Activated CD8-positive, alpha-beta T cell treated with anti-CD3 and anti-CD28 coated beads for 36 hours (primary cell): ENCODE measurements at regions of chr6 and their contacts with region 1.

Region 1: GRCh38 chr6:166989427-166990032 is 9.7 kb upstream of the CEP43 start:
- DNase-seq: peak; percentile 44
- ATAC-seq: peak; percentile 75
- H3K4me3 Mint-ChIP-seq: no peak overlapping the region
- H3K27ac Mint-ChIP-seq: no peak overlapping the region
- H3K4me1 Mint-ChIP-seq: peaks cover 1% of the 10 kb centered on the region
- H3K27me3 Mint-ChIP-seq: no peaks in the 10 kb centered on the region
- CTCF ChIP-seq: peak; percentile 51

Region 2: DNA sequence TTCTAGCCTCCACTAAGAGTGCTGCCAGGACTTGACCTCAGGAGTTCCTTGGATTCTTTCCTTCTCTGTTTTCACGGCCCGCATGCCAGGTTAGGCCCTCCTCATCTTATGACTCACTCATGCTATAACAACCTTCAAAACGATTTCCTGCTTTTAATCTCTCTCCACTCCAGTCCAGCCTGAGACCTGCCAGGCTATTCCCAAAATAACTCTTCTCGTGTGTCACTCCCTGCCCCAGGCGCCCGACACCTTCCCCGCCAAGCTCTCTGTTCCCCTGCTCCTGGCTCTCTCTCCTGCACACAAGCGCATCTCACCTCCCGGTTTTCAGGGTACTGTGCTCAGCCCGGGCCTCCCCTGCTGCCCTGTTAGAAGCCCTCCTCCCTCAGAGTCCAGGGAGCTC is 298.3 kb before region 1 on chr6:
- CTCF ChIA-PET with region 1: no interaction called
- POLR2A ChIA-PET with region 1: no interaction called
- intact Hi-C with region 1: no loop called
- DNase-seq: no peak
- ATAC-seq: no peak
- H3K4me3 Mint-ChIP-seq: no peak overlapping the region
- H3K27ac Mint-ChIP-seq: no peak overlapping the region
- H3K4me1 Mint-ChIP-seq: no peaks in the 10 kb centered on the region
- H3K27me3 Mint-ChIP-seq: no peaks in the 10 kb centered on the region
- CTCF ChIP-seq: no peak

Region 3: DNA sequence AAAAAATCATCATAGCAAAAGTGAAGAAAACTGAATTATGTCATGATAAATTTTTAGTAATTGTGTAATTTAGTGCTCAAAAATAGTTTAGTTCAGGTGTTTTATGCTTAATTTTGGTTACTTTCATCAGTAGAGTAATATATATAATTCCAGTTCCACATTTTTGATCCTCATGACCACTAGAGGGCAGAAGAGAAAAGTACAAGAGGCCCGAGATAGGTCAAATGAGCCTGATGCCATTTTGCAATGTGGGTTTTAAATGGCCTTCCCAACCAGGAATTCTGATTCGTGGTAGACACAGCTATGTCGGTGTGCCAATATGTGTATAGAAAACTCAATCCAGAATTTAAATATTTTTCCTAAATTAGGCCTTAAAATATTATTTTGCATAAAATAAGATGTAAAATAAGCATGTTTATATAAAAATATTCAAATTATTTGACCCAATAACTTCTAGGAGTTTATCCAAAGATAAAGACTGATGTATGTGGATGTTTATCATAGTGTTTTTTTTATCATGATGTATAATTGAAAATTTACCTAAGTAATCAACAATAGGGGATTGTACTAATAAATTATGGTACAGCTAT is 202.7 kb before region 1 on chr6:
- CTCF ChIA-PET with region 1: interaction called, 33 read pairs
- POLR2A ChIA-PET with region 1: interaction called, 3 read pairs
- intact Hi-C with region 1: loop called (anchors 5 kb)
- DNase-seq: peak; percentile 14
- ATAC-seq: no peak
- H3K4me3 Mint-ChIP-seq: no peak overlapping the region
- H3K27ac Mint-ChIP-seq: no peak overlapping the region
- H3K4me1 Mint-ChIP-seq: no peaks in the 10 kb centered on the region
- H3K27me3 Mint-ChIP-seq: no peaks in the 10 kb centered on the region
- CTCF ChIP-seq: peak; percentile 91

Region 4: DNA sequence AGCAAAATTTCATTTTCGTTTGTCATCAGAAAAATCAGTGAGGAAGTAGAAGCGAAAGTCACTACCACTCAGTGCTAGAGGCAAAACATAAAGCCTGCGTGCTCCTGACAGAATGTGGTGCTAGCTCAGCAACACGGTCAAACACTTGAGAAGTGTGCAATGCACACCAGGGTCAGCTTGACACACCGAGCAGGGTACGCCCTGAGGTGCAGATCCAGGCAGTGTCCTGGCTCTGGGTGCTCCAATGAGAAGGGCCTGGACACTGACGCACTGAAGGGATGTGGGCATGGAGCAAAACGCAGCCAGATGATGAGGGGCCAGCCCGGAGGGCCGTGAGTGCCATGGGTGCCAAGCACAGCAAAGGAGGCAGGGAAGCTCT is 39.1 kb before region 1 on chr6:
- CTCF ChIA-PET with region 1: interaction called, 23 read pairs
- POLR2A ChIA-PET with region 1: no interaction called
- intact Hi-C with region 1: no loop called
- DNase-seq: no peak
- ATAC-seq: no peak
- H3K4me3 Mint-ChIP-seq: peak overlapping the region; percentile 42
- H3K27ac Mint-ChIP-seq: peak overlapping the region; percentile 79
- H3K4me1 Mint-ChIP-seq: peaks cover 56% of the 10 kb centered on the region
- H3K27me3 Mint-ChIP-seq: no peaks in the 10 kb centered on the region
- CTCF ChIP-seq: no peak

Region 5: DNA sequence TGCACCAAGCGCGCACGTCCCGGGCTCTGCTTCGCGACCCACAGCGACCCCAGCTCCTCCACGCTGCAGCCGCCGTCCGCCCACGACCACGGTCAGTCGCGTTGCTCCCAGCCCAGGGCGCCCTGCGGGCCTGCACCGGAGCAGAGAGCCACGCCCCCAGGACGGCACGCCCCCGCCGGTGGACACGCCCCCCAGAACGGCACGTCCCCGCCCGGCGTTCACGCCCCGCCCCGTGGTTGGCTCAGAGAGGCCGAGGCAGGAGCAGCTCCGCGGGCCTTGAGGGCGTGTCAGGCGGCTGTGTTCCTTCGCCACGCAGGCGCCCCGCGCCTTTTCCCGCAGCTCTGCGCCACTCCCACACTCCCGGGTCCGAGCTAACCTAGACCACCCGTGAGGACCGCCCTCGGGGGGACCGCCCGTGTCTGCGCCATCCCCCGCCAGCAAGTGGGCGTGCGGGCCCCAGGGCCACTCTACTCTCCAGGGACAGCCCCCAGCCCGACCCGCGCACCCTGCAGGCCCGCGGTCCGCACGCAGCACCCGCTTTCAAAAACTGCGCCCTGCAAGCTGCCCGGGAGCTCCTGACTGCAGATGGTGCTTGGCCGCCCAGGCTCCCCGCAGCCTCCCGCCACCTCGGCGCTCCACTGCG is 33.0 kb before region 1 on chr6 and contains the start of gene RNASET2:
- CTCF ChIA-PET with region 1: interaction called, 23 read pairs
- POLR2A ChIA-PET with region 1: no interaction called
- intact Hi-C with region 1: no loop called
- DNase-seq: peak; percentile 99
- ATAC-seq: peak; percentile 86
- H3K4me3 Mint-ChIP-seq: peak within 1 kb of the TSS; percentile 90
- H3K27ac Mint-ChIP-seq: peak within 1 kb of the TSS; percentile 86
- H3K4me1 Mint-ChIP-seq: peaks cover 66% of the 10 kb centered on the region
- H3K27me3 Mint-ChIP-seq: no peaks in the 10 kb centered on the region
- CTCF ChIP-seq: no peak
- total RNA-seq, gene RNASET2: 69.2 to 70.2 TPM

Region 6: GRCh38 chr6:166969390-166970002 is 20.0 kb before region 1 on chr6:
- CTCF ChIA-PET with region 1: interaction called, 24 read pairs
- POLR2A ChIA-PET with region 1: interaction called, 4 read pairs
- intact Hi-C with region 1: no loop called
- DNase-seq: no peak
- ATAC-seq: no peak
- H3K4me3 Mint-ChIP-seq: no peak overlapping the region
- H3K27ac Mint-ChIP-seq: no peak overlapping the region
- H3K4me1 Mint-ChIP-seq: peaks cover 19% of the 10 kb centered on the region
- H3K27me3 Mint-ChIP-seq: no peaks in the 10 kb centered on the region
- CTCF ChIP-seq: no peak

Region 7: DNA sequence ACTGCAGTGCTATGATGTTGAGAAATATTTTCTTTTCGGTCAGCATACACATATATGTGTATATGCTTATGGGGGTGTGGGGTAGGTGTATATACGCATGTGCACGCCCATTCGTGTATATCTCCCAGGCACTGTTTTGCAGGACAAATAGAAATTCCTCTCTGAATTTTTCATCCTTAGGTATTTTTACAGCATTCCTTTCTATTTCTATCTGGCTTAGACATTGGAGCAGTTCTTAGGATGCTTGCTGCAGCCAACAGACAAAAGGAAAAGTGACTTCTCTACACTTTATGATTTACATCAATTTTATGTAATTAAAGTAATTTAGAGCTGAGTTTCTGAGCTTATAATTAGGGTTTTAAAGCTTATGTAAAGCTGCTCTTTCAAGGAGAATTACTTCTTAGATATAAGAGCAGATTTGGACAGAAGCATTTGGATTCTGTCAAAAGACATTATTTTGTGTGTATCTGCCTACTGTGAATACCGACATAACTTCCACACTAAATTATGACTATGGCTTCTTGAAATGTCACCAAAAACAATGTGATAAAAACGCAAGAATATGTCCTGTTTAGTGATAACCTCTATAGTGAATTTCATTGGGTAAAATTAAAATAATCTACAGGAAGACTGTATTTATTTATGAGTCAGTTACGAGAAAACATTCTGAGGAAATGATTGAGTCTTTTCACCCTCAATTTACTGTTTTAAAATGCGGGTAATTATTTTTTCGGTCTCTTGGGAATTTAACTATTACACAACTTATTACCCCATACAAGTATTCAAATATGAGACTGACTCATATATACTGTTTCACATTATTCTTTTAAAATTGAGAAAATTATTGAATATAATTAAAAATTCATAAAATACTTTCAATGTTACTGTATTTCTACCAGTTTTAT is 11.7 kb before region 1 on chr6:
- CTCF ChIA-PET with region 1: interaction called, 18 read pairs
- POLR2A ChIA-PET with region 1: interaction called, 4 read pairs
- intact Hi-C with region 1: no loop called
- DNase-seq: no peak
- ATAC-seq: no peak
- H3K4me3 Mint-ChIP-seq: no peak overlapping the region
- H3K27ac Mint-ChIP-seq: no peak overlapping the region
- H3K4me1 Mint-ChIP-seq: no peaks in the 10 kb centered on the region
- H3K27me3 Mint-ChIP-seq: no peaks in the 10 kb centered on the region
- CTCF ChIP-seq: no peak

Region 8: GRCh38 chr6:167056370-167056769 is 66.8 kb after region 1 on chr6:
- CTCF ChIA-PET with region 1: no interaction called
- POLR2A ChIA-PET with region 1: no interaction called
- intact Hi-C with region 1: no loop called
- DNase-seq: peak; percentile 70
- ATAC-seq: peak; percentile 90
- H3K4me3 Mint-ChIP-seq: no peak overlapping the region
- H3K27ac Mint-ChIP-seq: no peak overlapping the region
- H3K4me1 Mint-ChIP-seq: peaks cover 26% of the 10 kb centered on the region
- H3K27me3 Mint-ChIP-seq: peaks cover 2% of the 10 kb centered on the region
- CTCF ChIP-seq: no peak

Region 9: DNA sequence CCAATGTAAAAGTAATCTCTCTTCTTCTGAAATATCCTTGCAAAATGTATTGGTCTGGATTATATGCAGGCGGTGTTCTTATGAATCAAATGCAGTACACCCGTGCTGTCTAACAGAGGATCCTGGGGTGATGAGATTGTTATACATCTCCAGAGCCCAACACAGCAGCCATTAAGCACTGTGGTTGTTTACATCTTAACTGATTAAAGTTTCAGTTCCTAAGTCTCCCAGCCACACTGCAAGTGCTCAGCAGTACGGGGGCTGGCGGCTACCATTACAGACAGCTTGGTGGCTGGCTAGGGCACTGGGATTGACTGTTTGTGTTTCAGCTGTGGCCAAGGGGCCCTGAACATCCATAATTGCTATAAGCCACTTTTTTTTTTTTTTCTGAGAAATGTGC is 308.6 kb after region 1 on chr6:
- CTCF ChIA-PET with region 1: no interaction called
- POLR2A ChIA-PET with region 1: no interaction called
- intact Hi-C with region 1: no loop called
- DNase-seq: no peak
- ATAC-seq: no peak
- H3K4me3 Mint-ChIP-seq: no peak overlapping the region
- H3K27ac Mint-ChIP-seq: no peak overlapping the region
- H3K4me1 Mint-ChIP-seq: no peaks in the 10 kb centered on the region
- H3K27me3 Mint-ChIP-seq: peaks cover 3% of the 10 kb centered on the region
- CTCF ChIP-seq: no peak

Region 10: DNA sequence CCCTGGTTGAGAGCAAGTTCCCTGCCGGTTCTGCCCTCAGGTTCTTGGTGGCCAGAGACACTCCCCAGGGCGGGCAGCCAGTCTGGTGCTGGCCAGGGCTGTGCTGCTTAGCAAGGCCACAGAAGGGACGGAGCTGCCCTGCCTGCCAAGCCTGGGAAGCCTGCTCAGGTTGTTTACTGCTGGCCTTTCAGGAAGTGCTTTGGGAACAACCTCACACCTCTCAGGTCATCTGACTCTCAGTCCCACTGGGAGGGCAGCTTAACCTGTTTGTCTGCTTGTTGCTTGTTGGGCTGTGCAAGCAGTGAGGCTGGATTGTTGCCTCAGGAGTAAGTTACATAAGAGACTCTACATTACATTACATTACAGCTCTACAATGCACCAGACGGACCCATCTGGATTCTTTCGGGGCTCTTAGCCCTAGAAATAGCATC is 761.4 kb after region 1 on chr6:
- CTCF ChIA-PET with region 1: no interaction called
- POLR2A ChIA-PET with region 1: no interaction called
- intact Hi-C with region 1: no loop called
- DNase-seq: no peak
- ATAC-seq: no peak
- H3K4me3 Mint-ChIP-seq: no peak overlapping the region
- H3K27ac Mint-ChIP-seq: no peak overlapping the region
- H3K4me1 Mint-ChIP-seq: no peaks in the 10 kb centered on the region
- H3K27me3 Mint-ChIP-seq: peaks cover 4% of the 10 kb centered on the region
- CTCF ChIP-seq: no peak